ENCODE measurements at regions of chr15 and their contacts with region 1.

Region 1: GRCh38 chr15:62495670-62496614 is 330.9 kb upstream of the C2CD4B start:
- DNase-seq: no peak

Region 2: GRCh38 chr15:62287066-62287857 is 208.7 kb before region 1 on chr15:
- intact Hi-C with region 1: no loop called
- DNase-seq: no peak

Region 3: DNA sequence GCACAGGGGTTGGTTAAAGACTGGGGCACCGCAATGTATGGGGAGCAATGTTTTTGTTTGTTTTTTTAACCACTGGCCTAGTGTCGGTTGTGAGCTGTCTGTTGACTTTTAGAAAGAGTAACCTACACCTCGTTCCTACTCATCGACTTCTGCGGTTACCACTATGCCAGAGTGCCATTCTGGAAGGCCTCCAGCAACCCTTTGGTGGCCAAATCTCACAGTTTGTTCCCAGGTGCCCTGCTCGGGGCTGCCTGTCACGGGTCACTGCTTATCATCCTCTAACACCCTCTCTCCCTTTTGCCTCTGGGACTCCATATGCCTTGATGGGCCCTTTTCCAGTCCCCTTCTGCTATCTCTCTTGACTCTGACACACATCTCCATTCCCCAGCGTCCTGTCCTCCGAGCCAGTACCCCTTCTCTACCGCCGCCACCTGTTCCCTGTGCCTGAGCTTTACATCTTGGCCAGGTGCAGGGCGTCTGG is 40.5 kb before region 1 on chr15:
- intact Hi-C with region 1: loop called (anchors 5 kb)
- DNase-seq: no peak

Measured in cardiac septum (tissue), 1 donor.